B cell (primary cell): ENCODE measurements at regions of chr9 and their contacts with region 1.

Region 1: GRCh38 chr9:2817999-2818803 is 25.7 kb downstream of the PUM3 start:
- DNase-seq: no peak
- ATAC-seq: no peak
- H3K4me3 ChIP-seq: no peak overlapping the region
- H3K4me3 Mint-ChIP-seq: no peak overlapping the region
- H3K27ac ChIP-seq: no peak overlapping the region
- H3K27ac Mint-ChIP-seq: no peak overlapping the region
- H3K4me1 ChIP-seq: no peaks in the 10 kb centered on the region
- H3K4me1 Mint-ChIP-seq: peaks cover 3% of the 10 kb centered on the region
- H3K27me3 ChIP-seq: no peaks in the 10 kb centered on the region
- H3K27me3 Mint-ChIP-seq: no peaks in the 10 kb centered on the region
- CTCF ChIP-seq: no peak

Region 2: DNA sequence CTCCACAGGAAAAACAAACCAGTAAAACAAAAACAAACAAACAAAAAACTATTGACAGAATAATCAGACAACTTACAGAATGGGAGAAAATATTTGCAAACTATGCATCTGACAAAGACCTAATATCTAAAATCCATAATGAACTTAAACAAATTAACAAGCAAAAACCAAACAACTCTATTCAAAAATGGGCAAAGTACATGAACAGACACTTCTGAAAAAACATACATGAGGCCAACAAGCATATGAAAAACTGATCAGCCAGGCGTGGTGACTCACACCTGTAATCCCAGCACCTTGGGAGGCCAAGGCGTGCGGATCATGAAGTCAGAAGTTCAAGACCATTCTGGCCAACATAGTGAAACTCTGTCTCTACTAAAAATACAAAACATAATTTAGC is 40.7 kb before region 1 on chr9:
- CTCF ChIA-PET with region 1: no interaction called
- POLR2A ChIA-PET with region 1: no interaction called
- intact Hi-C with region 1: loop called (anchors 2 kb)
- DNase-seq: no peak
- ATAC-seq: no peak
- H3K4me3 ChIP-seq: no peak overlapping the region
- H3K4me3 Mint-ChIP-seq: no peak overlapping the region
- H3K27ac ChIP-seq: no peak overlapping the region
- H3K27ac Mint-ChIP-seq: no peak overlapping the region
- H3K4me1 ChIP-seq: no peaks in the 10 kb centered on the region
- H3K4me1 Mint-ChIP-seq: no peaks in the 10 kb centered on the region
- H3K27me3 ChIP-seq: no peaks in the 10 kb centered on the region
- H3K27me3 Mint-ChIP-seq: no peaks in the 10 kb centered on the region
- CTCF ChIP-seq: no peak

Region 3: DNA sequence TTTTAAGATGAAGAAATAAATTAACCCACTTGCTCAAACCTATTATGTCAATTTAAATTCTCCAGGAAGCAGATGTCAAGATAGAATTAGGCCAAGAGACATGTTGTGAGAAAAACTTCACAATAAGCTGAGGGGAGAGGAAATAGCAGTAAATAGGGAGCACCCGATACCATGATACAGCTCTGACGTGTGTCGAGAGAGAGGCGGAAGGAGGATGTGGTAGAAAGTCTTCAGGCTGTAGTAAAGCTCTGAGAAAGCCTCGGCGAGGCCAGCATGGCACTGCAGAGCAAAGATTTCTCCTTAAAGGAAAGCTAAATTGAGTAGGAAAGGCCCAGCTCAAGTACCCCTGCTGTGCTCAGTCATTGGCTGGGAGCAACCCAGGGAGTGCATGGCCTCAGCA is 31.7 kb after region 1 on chr9:
- CTCF ChIA-PET with region 1: no interaction called
- POLR2A ChIA-PET with region 1: no interaction called
- intact Hi-C with region 1: no loop called
- DNase-seq: no peak
- ATAC-seq: no peak
- H3K4me3 ChIP-seq: no peak overlapping the region
- H3K4me3 Mint-ChIP-seq: no peak overlapping the region
- H3K27ac ChIP-seq: no peak overlapping the region
- H3K27ac Mint-ChIP-seq: no peak overlapping the region
- H3K4me1 ChIP-seq: peaks cover 4 to 7% of the 10 kb centered on the region in 2 donors
- H3K4me1 Mint-ChIP-seq: peaks cover 6% of the 10 kb centered on the region
- H3K27me3 ChIP-seq: peaks cover 0 to 11% (median 0%) of the 10 kb centered on the region in 4 experiments
- H3K27me3 Mint-ChIP-seq: peaks cover 22% of the 10 kb centered on the region
- CTCF ChIP-seq: no peak